ENCODE measurements at regions of chr16 and their contacts with region 1.

Region 1: DNA sequence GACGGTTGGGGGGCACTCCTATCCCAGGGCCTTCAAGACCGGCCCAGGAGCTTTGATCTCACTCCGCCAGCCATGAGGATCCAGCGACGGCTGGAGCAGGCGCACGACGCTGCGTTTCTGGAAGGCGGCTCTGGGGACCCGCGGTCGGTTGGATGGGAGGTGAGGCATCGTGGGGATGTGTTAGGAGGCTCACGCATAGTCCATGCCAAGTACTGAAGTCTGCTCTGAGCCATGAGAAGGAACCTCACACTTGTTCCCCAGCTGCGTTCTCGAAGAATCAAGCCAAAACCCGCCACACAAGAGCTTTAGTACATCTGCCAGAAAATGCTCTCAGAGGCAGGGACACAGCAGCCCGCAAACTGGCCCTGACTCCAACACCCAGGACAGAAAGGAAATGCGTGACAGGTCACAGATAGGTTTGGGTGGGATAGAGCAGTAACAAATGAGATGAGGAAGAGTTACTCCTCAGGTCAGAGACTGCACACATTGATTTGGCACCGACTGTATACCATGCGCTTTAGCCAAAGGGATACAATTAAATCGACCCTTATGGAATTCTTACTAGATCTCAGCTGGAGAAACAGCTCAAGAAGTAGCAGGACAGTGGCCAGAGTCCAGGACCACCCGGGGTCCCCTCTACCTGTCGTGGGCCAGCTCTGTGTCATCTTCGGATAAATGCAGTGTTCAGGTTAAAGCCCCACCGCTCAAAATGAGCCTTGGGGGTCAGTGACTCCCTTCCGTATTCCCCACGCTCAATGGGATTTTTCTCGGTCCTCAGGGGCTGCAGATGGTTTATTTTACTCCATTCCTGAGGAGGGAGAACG is 6.7 kb upstream of the GSG1L start:
- DNase-seq: no peak
- H3K4me3 ChIP-seq: no peak overlapping the region
- H3K27ac ChIP-seq: no peak overlapping the region
- H3K4me1 ChIP-seq: peaks cover 0 to 24% (median 16%) of the 10 kb centered on the region in 4 donors
- H3K27me3 ChIP-seq: no peaks in the 10 kb centered on the region
- CTCF ChIP-seq: no peak

Region 2: GRCh38 chr16:27639561-27640276 is 430.5 kb before region 1 on chr16:
- intact Hi-C with region 1: loop called (anchors 10 kb)
- DNase-seq: no peak
- H3K4me3 ChIP-seq: no peak overlapping the region
- H3K27ac ChIP-seq: no peak overlapping the region
- H3K4me1 ChIP-seq: no peaks in the 10 kb centered on the region
- H3K27me3 ChIP-seq: no peaks in the 10 kb centered on the region
- CTCF ChIP-seq: peak; percentile 29 to 37

Region 3: GRCh38 chr16:27972500-27972899 is 97.7 kb before region 1 on chr16:
- intact Hi-C with region 1: loop called (anchors 5 kb)
- DNase-seq: no peak
- H3K4me3 ChIP-seq: no peak overlapping the region
- H3K27ac ChIP-seq: no peak overlapping the region
- H3K4me1 ChIP-seq: peaks cover 0 to 12% (median 0%) of the 10 kb centered on the region in 4 donors
- H3K27me3 ChIP-seq: no peaks in the 10 kb centered on the region
- CTCF ChIP-seq: peak; percentile 17 to 31